A673 (cell line): ENCODE measurements at regions of chr6 and their contacts with region 1.

Region 1: GRCh38 chr6:27251606-27252251 is 4.2 kb downstream of the PRSS16 start:
- DNase-seq: peak; percentile 88
- H3K4me3 ChIP-seq: peak overlapping the region; percentile 56
- H3K27ac ChIP-seq: no peak overlapping the region
- H3K4me1 ChIP-seq: no peaks in the 10 kb centered on the region
- H3K27me3 ChIP-seq: no peaks in the 10 kb centered on the region
- CTCF ChIP-seq: peak; percentile 73

Region 2: DNA sequence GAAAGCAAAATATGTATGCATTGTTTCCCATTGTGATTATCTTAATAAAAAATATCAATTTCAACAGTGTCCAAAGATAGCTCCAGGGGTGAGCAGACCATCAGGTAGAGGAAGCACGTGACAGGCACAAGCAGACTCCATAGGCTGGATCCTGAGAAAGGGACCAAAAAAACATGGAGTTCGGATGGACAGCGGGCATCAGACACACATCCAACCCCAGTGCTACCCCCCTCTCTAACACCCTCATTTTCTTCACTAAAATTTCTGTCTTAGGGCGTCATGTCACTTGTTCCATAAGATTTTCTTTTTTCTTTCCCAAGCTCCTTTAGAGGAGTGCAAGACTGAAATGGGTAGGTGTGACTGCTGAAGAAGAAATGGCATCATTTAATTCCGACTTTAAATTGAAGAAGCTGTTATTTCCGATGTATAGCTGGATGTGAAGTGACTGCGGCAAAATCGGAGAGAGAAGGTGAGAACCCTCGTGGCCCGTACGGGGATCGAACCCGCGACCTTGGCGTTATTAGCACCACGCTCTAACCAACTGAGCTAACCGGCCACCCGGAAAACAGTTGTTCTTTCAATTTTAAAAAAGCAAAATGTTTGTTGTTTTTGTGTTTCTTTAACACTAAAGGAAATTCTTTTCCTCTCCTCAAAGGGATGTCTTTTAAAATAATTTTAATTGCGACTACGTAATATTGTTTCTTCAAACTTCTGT is 14.5 kb before region 1 on chr6:
- CTCF ChIA-PET with region 1: interaction called, 12 read pairs
- POLR2A ChIA-PET with region 1: no interaction called
- intact Hi-C with region 1: no loop called
- DNase-seq: peak; percentile 75
- H3K4me3 ChIP-seq: peak overlapping the region; percentile 26
- H3K27ac ChIP-seq: no peak overlapping the region
- H3K4me1 ChIP-seq: no peaks in the 10 kb centered on the region
- H3K27me3 ChIP-seq: no peaks in the 10 kb centered on the region
- CTCF ChIP-seq: no peak

Region 3: GRCh38 chr6:27295301-27296081 is 43.8 kb after region 1 on chr6:
- CTCF ChIA-PET with region 1: no interaction called
- POLR2A ChIA-PET with region 1: no interaction called
- intact Hi-C with region 1: no loop called
- DNase-seq: peak; percentile 91
- H3K4me3 ChIP-seq: peak overlapping the region; percentile 69
- H3K27ac ChIP-seq: no peak overlapping the region
- H3K4me1 ChIP-seq: peaks cover 10% of the 10 kb centered on the region
- H3K27me3 ChIP-seq: no peaks in the 10 kb centered on the region
- CTCF ChIP-seq: no peak